ENCODE measurements at regions of chr20 and their contacts with region 1.

Region 1: DNA sequence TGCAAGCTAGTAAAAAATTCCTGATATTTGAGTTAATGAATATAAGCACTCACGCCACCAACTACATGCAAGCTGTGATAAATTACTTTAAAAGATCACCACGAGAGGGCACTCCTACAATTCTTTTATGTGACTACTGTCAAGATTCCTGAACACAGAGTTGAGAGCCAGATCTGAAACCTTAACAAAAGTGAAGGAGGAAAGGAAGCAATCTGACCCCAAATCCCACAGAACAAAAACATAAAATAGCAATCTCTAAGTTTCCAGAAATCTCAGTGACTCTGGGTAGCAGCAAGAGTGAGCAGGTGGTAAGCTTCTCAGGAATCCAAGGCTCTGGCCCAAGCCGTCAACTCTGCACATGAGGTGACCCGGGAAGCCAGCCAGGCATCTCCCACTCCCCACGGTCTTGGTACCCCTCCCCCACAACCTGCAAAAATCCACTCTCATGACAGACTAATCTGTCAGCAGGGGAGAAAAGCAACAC is 55.1 kb downstream of the STAU1 start:
- DNase-seq: no peak

Region 2: GRCh38 chr20:49186535-49187329 is 53.7 kb after region 1 on chr20:
- intact Hi-C with region 1: loop called in 1 of 2 experiments (anchors 10 kb)
- DNase-seq: no peak

Region 3: DNA sequence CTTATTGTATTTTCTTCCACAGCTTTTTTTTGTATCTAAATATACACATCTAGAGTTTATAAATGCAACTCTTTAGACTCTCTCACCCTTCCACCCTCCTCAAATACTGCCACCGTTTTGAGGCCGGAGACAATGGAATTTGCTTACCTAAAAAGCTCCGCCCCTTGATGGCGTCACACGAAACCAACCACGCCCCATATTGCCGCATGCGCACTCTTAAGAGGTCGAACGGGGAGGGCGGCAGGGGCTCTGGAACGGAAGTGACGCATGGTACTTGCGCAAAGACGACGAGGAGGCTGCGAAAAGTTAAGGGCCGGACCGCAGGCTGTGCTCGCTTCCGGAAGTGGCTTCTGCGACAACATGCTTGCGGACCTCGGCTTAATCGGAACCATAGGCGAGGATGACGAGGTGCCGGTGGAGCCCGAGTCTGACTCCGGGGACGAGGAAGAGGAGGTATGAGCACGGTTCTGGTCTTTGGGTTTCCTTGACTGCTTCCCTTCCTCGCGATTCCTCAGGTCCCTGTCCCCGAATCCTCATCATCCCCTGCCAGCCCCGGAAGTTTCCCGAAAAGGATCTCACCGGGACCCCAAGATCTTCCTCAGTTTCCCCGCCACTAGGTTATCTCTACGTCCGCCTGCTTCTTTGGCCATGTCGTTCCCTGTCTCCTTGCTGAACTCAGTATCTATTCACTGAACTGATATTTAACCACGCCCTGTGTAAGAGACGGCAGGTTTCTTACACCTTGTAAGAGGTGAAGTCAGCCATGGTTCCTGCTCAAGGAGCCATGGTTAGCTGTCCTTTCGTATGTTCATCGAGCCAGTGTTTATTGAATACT is 86.3 kb after region 1 on chr20 and contains the start of gene DDX27:
- intact Hi-C with region 1: loop called (anchors 5 to 10 kb)
- DNase-seq: peak; percentile 99
- total RNA-seq, gene DDX27: 17.7 to 20.1 TPM

Measured in posterior vena cava (tissue), 2 donors.